ENCODE measurements at regions of chr7 and their contacts with region 1.

Region 1: DNA sequence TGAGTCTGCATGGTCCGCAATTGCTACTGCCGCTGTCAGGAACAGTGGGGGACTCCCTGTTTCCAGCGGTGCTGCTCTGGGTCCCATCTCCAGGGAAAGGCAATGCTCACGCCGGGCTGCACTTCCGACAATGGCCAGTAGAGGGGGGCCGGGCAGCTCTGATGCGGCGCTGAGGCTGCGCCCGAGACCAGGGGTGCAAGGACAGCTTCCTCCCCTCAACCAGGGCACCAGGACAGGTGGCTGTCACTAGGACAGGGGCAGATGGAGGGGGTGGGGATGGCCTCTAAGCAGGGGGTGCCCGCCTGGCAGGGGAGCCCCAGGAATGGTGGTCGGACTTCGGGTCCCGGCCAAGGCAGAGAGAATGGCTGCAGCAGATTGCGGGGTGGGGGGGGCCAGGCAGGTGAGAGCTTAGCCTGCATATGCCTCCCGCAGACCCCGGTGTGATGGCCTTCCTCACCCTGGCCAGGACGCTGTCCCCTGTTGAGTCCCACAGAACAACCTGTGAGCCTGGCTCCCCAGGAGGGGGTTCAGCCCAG is 71.0 kb upstream of the KCTD7 start:
- DNase-seq: peak; percentile 32
- H3K4me3 ChIP-seq: no peak overlapping the region
- H3K27ac ChIP-seq: no peak overlapping the region
- H3K4me1 ChIP-seq: no peaks in the 10 kb centered on the region
- H3K27me3 ChIP-seq: no peaks in the 10 kb centered on the region
- CTCF ChIP-seq: peak; percentile 82 to 96
- POLR2A ChIP-seq: no peak

Region 2: GRCh38 chr7:66359656-66360211 is 197.9 kb before region 1 on chr7:
- CTCF ChIA-PET with region 1: no interaction called
- POLR2A ChIA-PET with region 1: no interaction called
- dilution Hi-C with region 1: no loop called
- intact Hi-C with region 1: no loop called
- DNase-seq: no peak
- H3K4me3 ChIP-seq: no peak overlapping the region
- H3K27ac ChIP-seq: no peak overlapping the region
- H3K4me1 ChIP-seq: no peaks in the 10 kb centered on the region
- H3K27me3 ChIP-seq: no peaks in the 10 kb centered on the region
- CTCF ChIP-seq: no peak
- POLR2A ChIP-seq: no peak

Region 3: GRCh38 chr7:66643395-66643794 is 85.7 kb after region 1 on chr7:
- CTCF ChIA-PET with region 1: no interaction called
- POLR2A ChIA-PET with region 1: no interaction called
- dilution Hi-C with region 1: no loop called
- intact Hi-C with region 1: loop called (anchors 1 kb)
- DNase-seq: no peak
- H3K4me3 ChIP-seq: no peak overlapping the region
- H3K27ac ChIP-seq: no peak overlapping the region
- H3K4me1 ChIP-seq: no peaks in the 10 kb centered on the region
- H3K27me3 ChIP-seq: no peaks in the 10 kb centered on the region
- CTCF ChIP-seq: no peak
- POLR2A ChIP-seq: no peak

Measured in endothelial cell of umbilical vein (primary cell).